AG04450 (cell line): ENCODE measurements at regions of chr3 and their contacts with region 1.

Region 1: DNA sequence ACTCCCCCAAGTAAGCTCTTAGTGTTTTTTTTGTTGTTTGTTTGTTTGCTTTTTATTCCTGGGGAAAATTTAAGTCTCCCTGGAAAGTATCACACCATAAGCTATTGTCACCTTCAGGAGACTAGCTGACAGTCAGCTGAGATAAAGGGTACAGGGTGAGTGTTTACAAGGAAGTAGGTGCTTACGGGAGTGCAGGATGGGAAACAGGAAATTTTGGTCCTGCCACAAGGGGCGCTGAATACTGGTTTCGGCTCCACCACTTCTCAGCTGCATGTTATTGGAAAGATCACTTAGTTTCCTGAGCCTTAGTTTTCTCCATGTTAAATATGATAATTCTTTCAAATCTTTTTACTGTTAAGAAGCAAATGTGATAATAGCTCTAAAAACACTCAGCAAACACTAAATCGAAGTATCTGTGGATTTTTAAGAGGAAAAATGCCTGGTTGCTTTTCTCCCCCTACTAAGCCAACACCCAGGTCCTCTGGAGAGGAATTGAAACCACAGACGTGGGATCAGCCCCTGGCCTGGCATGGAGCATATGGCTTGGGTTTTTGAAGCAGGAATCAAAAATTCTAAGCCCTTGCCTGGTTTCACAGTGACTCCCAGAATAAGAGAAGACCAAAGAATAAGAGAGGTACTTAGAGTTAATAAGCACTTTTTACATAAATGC is 90.7 kb downstream of the SCN11A start:
- DNase-seq: no peak
- H3K4me3 ChIP-seq: no peak overlapping the region
- H3K27ac ChIP-seq: no peak overlapping the region
- H3K27me3 ChIP-seq: peaks cover 2% of the 10 kb centered on the region
- CTCF ChIP-seq: peak; percentile 79

Region 2: DNA sequence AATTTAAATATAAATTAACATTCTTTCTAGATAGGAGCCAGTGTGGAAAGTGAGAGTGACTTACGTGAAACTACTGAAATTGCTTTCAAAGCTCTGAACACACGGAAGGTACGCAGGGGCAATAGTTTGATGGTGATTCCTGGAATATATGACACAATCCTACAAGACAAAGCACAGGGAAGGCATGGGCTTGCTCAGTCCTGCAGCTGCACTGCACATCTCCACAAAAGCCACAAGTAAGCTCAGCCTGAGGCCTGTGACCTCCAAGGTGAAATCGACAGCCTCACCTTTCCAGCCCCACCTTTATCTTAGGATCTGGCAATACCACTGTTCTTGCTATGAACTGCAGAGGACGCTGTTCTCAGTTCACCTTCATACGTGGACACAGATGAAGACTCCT is 35.7 kb before region 1 on chr3:
- CTCF ChIA-PET with region 1: no interaction called
- POLR2A ChIA-PET with region 1: no interaction called
- DNase-seq: no peak
- H3K4me3 ChIP-seq: no peak overlapping the region
- H3K27ac ChIP-seq: no peak overlapping the region
- H3K27me3 ChIP-seq: no peaks in the 10 kb centered on the region
- CTCF ChIP-seq: no peak

Region 3: GRCh38 chr3:38985581-38985980 is 24.5 kb after region 1 on chr3:
- CTCF ChIA-PET with region 1: interaction called, 11 read pairs
- POLR2A ChIA-PET with region 1: no interaction called
- DNase-seq: no peak
- H3K4me3 ChIP-seq: no peak overlapping the region
- H3K27ac ChIP-seq: peak overlapping the region; percentile 33
- H3K27me3 ChIP-seq: no peaks in the 10 kb centered on the region
- CTCF ChIP-seq: no peak

Region 4: GRCh38 chr3:38992117-38992760 is 31.2 kb after region 1 on chr3:
- CTCF ChIA-PET with region 1: interaction called, 47 read pairs
- POLR2A ChIA-PET with region 1: no interaction called
- DNase-seq: peak; percentile 45
- H3K4me3 ChIP-seq: no peak overlapping the region
- H3K27ac ChIP-seq: peak overlapping the region; percentile 66
- H3K27me3 ChIP-seq: no peaks in the 10 kb centered on the region
- CTCF ChIP-seq: no peak

Region 5: GRCh38 chr3:39279745-39280517 is 318.8 kb after region 1 on chr3 and contains the start of gene CX3CR1:
- CTCF ChIA-PET with region 1: no interaction called
- POLR2A ChIA-PET with region 1: no interaction called
- DNase-seq: no peak
- H3K4me3 ChIP-seq: no peak within 1 kb of the TSS
- H3K27ac ChIP-seq: no peak within 1 kb of the TSS
- H3K27me3 ChIP-seq: peaks cover 8% of the 10 kb centered on the region
- CTCF ChIP-seq: no peak
- polyA plus RNA-seq, gene CX3CR1: not detected in 2 replicates